Caco-2 (cell line): ENCODE measurements at regions of chr6 and their contacts with region 1.

Region 1: GRCh38 chr6:41846666-41847237 is 48.4 kb downstream of the USP49 start:
- DNase-seq: peak; percentile 65 to 83
- H3K4me3 ChIP-seq: no peak overlapping the region
- H3K4me3 Mint-ChIP-seq: no peak overlapping the region
- H3K27ac Mint-ChIP-seq: no peak overlapping the region
- H3K4me1 ChIP-seq: peaks cover 5% of the 10 kb centered on the region; the same call in 1 of the 2 replicates
- H3K4me1 Mint-ChIP-seq: peaks cover 12% of the 10 kb centered on the region
- H3K27me3 ChIP-seq: no peaks in the 10 kb centered on the region
- H3K27me3 Mint-ChIP-seq: no peaks in the 10 kb centered on the region
- CTCF ChIP-seq: peak; percentile 81 to 86

Region 2: DNA sequence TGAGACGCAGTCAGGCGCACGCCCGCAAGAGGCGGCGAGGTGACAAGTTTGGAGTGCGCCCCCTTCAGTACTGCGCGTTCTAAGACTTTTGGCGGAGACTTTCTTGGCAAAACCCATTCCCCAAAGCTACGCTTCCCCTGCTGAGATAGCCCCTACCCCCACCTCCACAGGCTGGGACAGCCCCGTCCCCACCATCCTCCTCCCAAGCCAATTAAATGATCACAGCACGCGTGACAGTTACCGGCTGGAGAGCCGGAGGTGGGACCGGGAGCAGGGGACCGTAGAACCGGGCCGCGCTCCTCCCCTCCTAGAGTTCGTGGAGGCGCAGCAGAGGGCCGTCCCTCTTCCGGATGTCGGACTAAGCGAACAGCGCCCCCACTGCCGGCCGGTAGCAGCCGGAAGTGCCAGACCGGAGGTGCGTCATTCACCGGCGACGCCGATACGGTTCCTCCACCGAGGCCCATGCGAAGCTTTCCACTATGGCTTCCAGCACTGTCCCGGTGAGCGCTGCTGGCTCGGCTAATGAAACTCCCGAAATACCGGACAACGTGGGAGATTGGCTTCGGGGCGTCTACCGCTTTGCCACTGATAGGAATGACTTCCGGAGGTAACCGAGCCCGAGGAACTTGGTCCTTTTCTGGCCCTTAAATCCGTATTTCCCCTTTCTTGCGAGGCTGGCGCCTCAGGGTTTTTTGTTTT is 59.4 kb before region 1 on chr6 and contains the start of gene TOMM6:
- CTCF ChIA-PET with region 1: no interaction called
- POLR2A ChIA-PET with region 1: no interaction called
- intact Hi-C with region 1: loop called (anchors 5 kb)
- DNase-seq: peak; percentile 93 to 96
- H3K4me3 ChIP-seq: peak within 1 kb of the TSS; percentile 86
- H3K4me3 Mint-ChIP-seq: peak within 1 kb of the TSS; percentile 89
- H3K27ac Mint-ChIP-seq: peak within 1 kb of the TSS; percentile 98
- H3K4me1 ChIP-seq: peaks cover 7% of the 10 kb centered on the region; the same call in 1 of the 2 replicates
- H3K4me1 Mint-ChIP-seq: peaks cover 9% of the 10 kb centered on the region
- H3K27me3 ChIP-seq: no peaks in the 10 kb centered on the region
- H3K27me3 Mint-ChIP-seq: no peaks in the 10 kb centered on the region
- CTCF ChIP-seq: peak; percentile 82 to 89
- total RNA-seq, gene TOMM6: 224 and 260 TPM in 2 replicates

Region 3: GRCh38 chr6:41895300-41896233 is 48.8 kb after region 1 on chr6 and contains the start of gene USP49:
- CTCF ChIA-PET with region 1: interaction called, 3 read pairs
- POLR2A ChIA-PET with region 1: no interaction called
- intact Hi-C with region 1: loop called (anchors 1 kb)
- DNase-seq: peak; percentile 89 to 96
- H3K4me3 ChIP-seq: peak within 1 kb of the TSS; percentile 52
- H3K4me3 Mint-ChIP-seq: no peak within 1 kb of the TSS
- H3K27ac Mint-ChIP-seq: no peak within 1 kb of the TSS
- H3K4me1 ChIP-seq: peaks cover 22% of the 10 kb centered on the region
- H3K4me1 Mint-ChIP-seq: peaks cover 7% of the 10 kb centered on the region
- H3K27me3 ChIP-seq: no peaks in the 10 kb centered on the region
- H3K27me3 Mint-ChIP-seq: no peaks in the 10 kb centered on the region
- CTCF ChIP-seq: no peak
- total RNA-seq, gene USP49: 17.9 and 18.5 TPM in 2 replicates

Region 4: GRCh38 chr6:41909727-41910126 is 63.0 kb after region 1 on chr6:
- CTCF ChIA-PET with region 1: no interaction called
- POLR2A ChIA-PET with region 1: no interaction called
- intact Hi-C with region 1: loop called (anchors 5 kb)
- DNase-seq: no peak
- H3K4me3 ChIP-seq: no peak overlapping the region
- H3K4me3 Mint-ChIP-seq: no peak overlapping the region
- H3K27ac Mint-ChIP-seq: no peak overlapping the region
- H3K4me1 ChIP-seq: peaks cover 35% of the 10 kb centered on the region
- H3K4me1 Mint-ChIP-seq: peaks cover 39% of the 10 kb centered on the region
- H3K27me3 ChIP-seq: no peaks in the 10 kb centered on the region
- H3K27me3 Mint-ChIP-seq: no peaks in the 10 kb centered on the region
- CTCF ChIP-seq: no peak

Region 5: GRCh38 chr6:41941280-41942066 is 94.7 kb after region 1 on chr6 and contains the start of gene CCND3:
- CTCF ChIA-PET with region 1: interaction called, 3 read pairs
- POLR2A ChIA-PET with region 1: interaction called, 3 read pairs
- intact Hi-C with region 1: loop called (anchors 1 kb)
- DNase-seq: peak; percentile 90 to 93
- H3K4me3 ChIP-seq: peak within 1 kb of the TSS; percentile 94
- H3K4me3 Mint-ChIP-seq: peak within 1 kb of the TSS; percentile 80
- H3K27ac Mint-ChIP-seq: peak within 1 kb of the TSS; percentile 86
- H3K4me1 ChIP-seq: peaks cover 17% of the 10 kb centered on the region
- H3K4me1 Mint-ChIP-seq: peaks cover 17% of the 10 kb centered on the region
- H3K27me3 ChIP-seq: no peaks in the 10 kb centered on the region
- H3K27me3 Mint-ChIP-seq: no peaks in the 10 kb centered on the region
- CTCF ChIP-seq: no peak
- total RNA-seq, gene CCND3: 24.7 and 26.9 TPM in 2 replicates